ENCODE measurements at regions of chr5 and their contacts with region 1.

Region 1: DNA sequence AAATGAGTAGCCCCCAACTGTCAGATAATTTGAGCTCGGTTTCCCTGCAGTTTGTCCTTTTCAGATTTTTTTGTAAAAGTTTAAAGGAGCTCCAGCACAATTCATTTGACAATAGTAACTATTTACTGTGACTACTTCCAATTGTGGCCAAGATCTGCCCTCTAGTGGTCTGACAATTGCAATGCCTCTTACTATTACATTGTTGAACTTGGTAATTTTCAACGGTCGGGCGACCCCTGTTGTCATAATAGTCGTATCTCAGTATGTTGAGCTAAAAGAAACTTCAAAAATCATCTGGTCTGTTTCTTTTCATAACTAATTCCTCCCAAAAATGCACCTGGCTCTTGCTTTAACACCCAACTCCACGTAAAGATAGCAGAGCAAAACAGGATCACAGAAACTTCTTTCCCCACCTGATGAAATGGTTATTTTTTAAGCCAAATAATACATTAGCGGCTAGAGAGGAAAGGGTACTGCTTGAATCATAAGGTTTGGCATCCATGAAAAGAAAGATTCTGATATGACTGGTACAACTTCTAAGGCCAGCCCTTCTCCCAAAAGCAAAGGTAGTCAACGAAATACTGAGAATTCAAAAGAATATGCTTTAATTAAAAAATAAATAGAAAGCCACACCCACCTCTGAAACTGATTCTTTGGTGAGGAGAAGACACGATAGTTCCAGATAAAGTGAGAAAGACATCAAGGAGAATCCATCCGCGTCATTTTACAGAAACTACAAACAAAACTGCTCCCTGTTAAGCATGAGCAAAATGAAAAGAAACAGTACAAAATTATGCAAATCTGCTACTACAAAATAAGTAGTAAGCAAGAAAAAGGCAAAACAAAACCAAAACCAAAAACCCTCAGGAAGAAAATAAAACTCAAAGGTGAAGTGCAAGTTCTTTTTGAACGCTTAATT is 76.9 kb upstream of the HTR4 start:
- DNase-seq: peak; percentile 54
- ATAC-seq: peak; percentile 90

Region 2: GRCh38 chr5:148179234-148179824 is 551.9 kb before region 1 on chr5:
- intact Hi-C with region 1: loop called (anchors 5 kb)
- DNase-seq: no peak
- ATAC-seq: peak; percentile 51

Region 3: DNA sequence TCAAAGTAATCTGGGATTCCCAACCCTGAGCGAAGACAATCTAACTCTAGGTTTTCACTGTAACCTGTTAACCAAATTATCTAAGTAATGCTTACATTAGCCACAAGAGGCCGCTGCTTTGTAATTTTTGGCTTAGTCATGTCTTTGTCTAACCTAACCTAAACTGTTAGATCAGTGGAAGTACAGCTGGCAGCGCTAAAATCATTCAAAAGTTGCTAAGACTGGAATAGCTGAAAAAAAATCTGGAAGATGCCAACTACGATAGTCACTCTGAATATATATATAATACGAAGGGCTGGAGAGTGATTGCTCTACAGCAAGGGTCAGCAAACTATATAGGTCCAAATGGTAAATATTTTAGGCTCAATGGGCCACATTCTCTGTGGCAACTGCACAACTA is 287.2 kb before region 1 on chr5:
- intact Hi-C with region 1: loop called (anchors 5 kb)
- DNase-seq: no peak
- ATAC-seq: peak; percentile 81

Region 4: GRCh38 chr5:149035372-149035790 is 304.2 kb after region 1 on chr5:
- intact Hi-C with region 1: loop called (anchors 10 kb)
- DNase-seq: peak; percentile 77
- ATAC-seq: peak; percentile 90

Region 5: GRCh38 chr5:149114403-149115312 is 383.5 kb after region 1 on chr5:
- intact Hi-C with region 1: loop called (anchors 5 kb)
- DNase-seq: no peak
- ATAC-seq: peak; percentile 97